CD4-positive, alpha-beta T cell (primary cell): ENCODE measurements at regions of chr1 and their contacts with region 1.

Region 1: DNA sequence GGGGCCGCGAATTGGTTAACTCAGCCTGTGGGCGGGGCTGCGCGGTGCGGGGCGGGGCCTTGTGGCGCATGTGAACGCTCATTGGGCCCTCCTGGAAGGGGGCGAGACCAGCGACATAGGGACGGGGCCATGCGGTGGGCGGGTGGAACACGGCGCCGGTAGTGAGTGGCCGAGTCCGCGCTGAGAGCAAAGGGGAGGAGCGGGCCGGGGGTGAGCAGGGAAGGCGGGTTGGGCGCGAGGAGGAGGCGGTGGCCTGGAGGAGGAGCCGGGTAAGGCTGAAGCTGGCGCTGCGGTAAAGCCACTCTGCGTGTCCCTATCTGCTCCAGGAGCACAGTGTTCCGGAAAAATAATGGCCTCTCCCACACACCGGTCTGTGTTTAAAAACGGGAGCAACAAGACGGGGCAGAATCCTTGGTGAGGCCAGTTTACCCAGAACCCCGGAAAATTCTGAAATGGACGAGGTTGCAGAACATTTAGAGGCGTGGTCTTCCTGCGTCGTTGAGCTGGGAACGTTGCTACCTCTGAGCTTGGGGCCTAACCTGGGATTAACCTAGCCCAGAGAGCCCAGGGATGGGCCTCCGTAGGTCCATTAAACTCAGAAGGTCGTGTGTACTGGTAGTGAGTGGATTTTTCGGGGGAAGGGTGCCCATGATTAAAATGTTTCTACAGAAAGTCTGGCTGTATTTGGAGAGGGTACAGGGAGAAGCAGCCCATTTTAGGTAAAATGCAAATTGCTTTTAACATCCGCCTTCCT is 533 bp upstream of the CTNNBIP1 start:
- DNase-seq: peak; percentile 100
- ATAC-seq: peak; percentile 90
- H3K4me3 ChIP-seq: peak overlapping the region; percentile 84
- H3K4me3 Mint-ChIP-seq: peak overlapping the region; percentile 96
- H3K27ac ChIP-seq: peak overlapping the region; percentile 65 to 70
- H3K27ac Mint-ChIP-seq: peak overlapping the region; percentile 94
- H3K4me1 ChIP-seq: peaks cover 23% of the 10 kb centered on the region
- H3K4me1 Mint-ChIP-seq: peaks cover 36% of the 10 kb centered on the region
- H3K27me3 ChIP-seq: no peaks in the 10 kb centered on the region
- H3K27me3 Mint-ChIP-seq: no peaks in the 10 kb centered on the region
- CTCF ChIP-seq: no peak

Region 2: DNA sequence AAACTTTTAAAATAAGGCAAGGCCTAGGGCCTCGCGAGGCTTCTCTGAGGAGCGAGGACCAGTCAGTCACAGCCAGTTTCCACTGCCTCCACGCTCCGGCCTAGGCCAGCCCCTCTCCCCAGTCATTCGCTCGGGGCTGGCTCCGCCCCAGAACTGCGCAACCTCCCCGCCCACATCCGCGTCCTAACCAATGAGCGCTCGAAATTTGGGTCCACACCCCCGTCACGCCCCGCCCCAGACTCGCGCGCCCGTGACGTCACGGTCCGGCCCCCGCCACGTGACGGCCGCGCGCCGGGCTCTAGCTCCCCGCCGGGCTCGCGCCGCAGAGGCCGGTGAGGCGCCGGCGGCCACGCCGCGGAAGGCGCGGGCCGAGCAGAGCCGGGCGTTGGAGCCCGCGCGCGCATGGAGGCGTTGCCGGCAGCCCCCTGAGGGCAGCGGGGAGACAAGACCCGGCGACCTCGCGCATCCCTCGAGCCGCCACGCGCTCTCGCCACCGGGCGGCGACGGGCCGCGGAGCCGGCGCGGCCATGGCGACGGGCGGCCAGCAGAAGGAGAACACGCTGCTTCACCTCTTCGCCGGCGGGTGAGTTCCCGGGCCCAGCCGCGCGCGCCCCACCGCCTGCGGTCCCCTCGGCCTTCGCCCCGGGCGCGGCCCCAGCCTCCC is 371.3 kb before region 1 on chr1 and contains the start of gene SLC25A33:
- CTCF ChIA-PET with region 1: no interaction called
- POLR2A ChIA-PET with region 1: no interaction called
- intact Hi-C with region 1: loop called in 1 of 2 experiments (anchors 1 kb)
- DNase-seq: peak; percentile 92 to 98 (median 95)
- ATAC-seq: peak; percentile 97
- H3K4me3 ChIP-seq: peak within 1 kb of the TSS; percentile 70
- H3K4me3 Mint-ChIP-seq: peak within 1 kb of the TSS; percentile 91
- H3K27ac ChIP-seq: peak within 1 kb of the TSS in 1 of 2 donors; percentile 69
- H3K27ac Mint-ChIP-seq: peak within 1 kb of the TSS; percentile 90
- H3K4me1 ChIP-seq: peaks cover 33% of the 10 kb centered on the region
- H3K4me1 Mint-ChIP-seq: peaks cover 33% of the 10 kb centered on the region
- H3K27me3 ChIP-seq: no peaks in the 10 kb centered on the region
- H3K27me3 Mint-ChIP-seq: no peaks in the 10 kb centered on the region
- CTCF ChIP-seq: no peak
- total RNA-seq, gene SLC25A33: 5.9 to 6.6 TPM

Region 3: GRCh38 chr1:9942939-9943788 is 32.6 kb after region 1 on chr1 and contains the starts of genes LZIC and NMNAT1:
- CTCF ChIA-PET with region 1: interaction called, 4 read pairs
- POLR2A ChIA-PET with region 1: interaction called, 15 read pairs
- intact Hi-C with region 1: loop called (anchors 1 kb)
- DNase-seq: peak; percentile 76 to 94 (median 85)
- ATAC-seq: peak; percentile 92
- H3K4me3 ChIP-seq: peak within 1 kb of the TSS; percentile 99
- H3K4me3 Mint-ChIP-seq: peak within 1 kb of the TSS; percentile 98
- H3K27ac ChIP-seq: peak within 1 kb of the TSS; percentile 73 to 90
- H3K27ac Mint-ChIP-seq: peak within 1 kb of the TSS; percentile 91
- H3K4me1 ChIP-seq: peaks cover 23% of the 10 kb centered on the region
- H3K4me1 Mint-ChIP-seq: peaks cover 20% of the 10 kb centered on the region
- H3K27me3 ChIP-seq: no peaks in the 10 kb centered on the region
- H3K27me3 Mint-ChIP-seq: no peaks in the 10 kb centered on the region
- CTCF ChIP-seq: no peak
- total RNA-seq, gene LZIC: 16.0 to 18.1 TPM
- total RNA-seq, gene NMNAT1: 0.66 to 1.0 TPM

Region 4: DNA sequence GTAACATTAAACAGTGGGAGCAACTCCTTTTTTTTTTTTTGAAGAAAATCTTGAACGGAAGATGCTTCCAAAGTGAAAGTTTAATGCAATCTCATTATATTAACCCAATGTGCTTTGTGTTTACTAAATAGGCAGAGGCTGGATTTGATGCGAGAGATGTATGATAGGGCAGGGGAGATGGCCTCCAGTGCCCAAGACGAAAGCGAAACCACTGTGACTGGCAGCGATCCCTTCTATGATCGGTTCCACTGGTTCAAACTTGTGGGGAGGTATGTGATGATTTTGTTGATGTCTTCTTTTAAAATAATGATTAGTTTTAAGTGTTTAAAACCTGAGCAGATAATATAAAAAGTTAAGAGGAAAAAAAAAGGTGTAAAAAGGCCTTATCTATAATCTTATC is 414.0 kb after region 1 on chr1:
- CTCF ChIA-PET with region 1: no interaction called
- POLR2A ChIA-PET with region 1: no interaction called
- intact Hi-C with region 1: no loop called
- DNase-seq: peak in 5 of 14 experiments; percentile 6 to 57 (median 47)
- ATAC-seq: no peak
- H3K4me3 ChIP-seq: peak overlapping the region; percentile 22
- H3K4me3 Mint-ChIP-seq: peak overlapping the region; percentile 73
- H3K27ac ChIP-seq: peak overlapping the region in 1 of 2 donors; percentile 29
- H3K27ac Mint-ChIP-seq: peak overlapping the region; percentile 77
- H3K4me1 ChIP-seq: no peaks in the 10 kb centered on the region
- H3K4me1 Mint-ChIP-seq: no peaks in the 10 kb centered on the region
- H3K27me3 ChIP-seq: no peaks in the 10 kb centered on the region
- H3K27me3 Mint-ChIP-seq: no peaks in the 10 kb centered on the region
- CTCF ChIP-seq: no peak